PC-9 (cell line): ENCODE measurements at regions of chr7 and their contacts with region 1.

Region 1: GRCh38 chr7:76359111-76359978 is 554 bp upstream of the YWHAG start:
- DNase-seq: peak; percentile 93 to 96
- H3K4me3 ChIP-seq: peak overlapping the region; percentile 73; the same call in 1 of the 2 replicates
- H3K27ac ChIP-seq: peak overlapping the region; percentile 80
- H3K4me1 ChIP-seq: peaks cover 48% of the 10 kb centered on the region
- H3K27me3 ChIP-seq: no peaks in the 10 kb centered on the region
- CTCF ChIP-seq: peak; percentile 69

Region 2: DNA sequence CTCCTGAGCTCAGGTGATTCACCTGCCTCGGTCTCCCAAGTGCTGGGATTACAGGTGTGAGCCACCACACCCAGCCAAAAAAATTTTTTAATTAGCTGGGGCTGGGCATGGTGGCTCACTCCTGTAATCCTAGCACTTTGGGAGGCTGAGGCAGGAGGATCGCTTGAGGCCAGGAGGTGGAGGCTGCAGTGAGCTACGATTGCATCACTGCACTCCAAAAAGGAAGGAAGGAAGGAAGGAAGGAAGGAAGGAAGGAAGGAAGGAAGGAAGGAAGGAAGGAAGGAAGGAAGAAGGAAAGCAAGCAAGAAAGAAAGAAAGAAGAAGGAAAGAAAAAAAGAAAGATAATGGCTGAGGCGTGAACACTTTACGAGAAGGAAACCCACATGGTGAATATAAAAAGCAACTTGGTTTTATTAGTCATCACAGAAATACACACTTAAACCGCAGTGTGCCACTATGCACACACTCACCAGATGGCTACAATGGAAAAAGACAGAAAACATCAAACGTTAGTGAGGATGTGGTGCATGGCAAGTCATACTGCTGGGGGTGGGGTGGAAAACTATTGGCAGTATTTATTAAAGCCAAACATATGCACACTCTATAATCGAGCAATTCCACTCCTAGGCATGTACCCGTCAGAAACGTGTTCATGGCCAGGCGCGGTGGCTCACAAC is 582.9 kb before region 1 on chr7:
- CTCF ChIA-PET with region 1: no interaction called
- POLR2A ChIA-PET with region 1: no interaction called
- intact Hi-C with region 1: no loop called
- DNase-seq: peak in 1 of 2 experiments; percentile 61
- H3K4me3 ChIP-seq: no peak overlapping the region
- H3K27ac ChIP-seq: no peak overlapping the region
- H3K4me1 ChIP-seq: peaks cover 14% of the 10 kb centered on the region
- H3K27me3 ChIP-seq: no peaks in the 10 kb centered on the region
- CTCF ChIP-seq: no peak

Region 3: GRCh38 chr7:76291343-76292212 is 67.8 kb before region 1 on chr7:
- CTCF ChIA-PET with region 1: no interaction called
- POLR2A ChIA-PET with region 1: no interaction called
- intact Hi-C with region 1: loop called (anchors 2 kb)
- DNase-seq: peak; percentile 97 to 100
- H3K4me3 ChIP-seq: peak overlapping the region; percentile 57
- H3K27ac ChIP-seq: peak overlapping the region; percentile 93
- H3K4me1 ChIP-seq: peaks cover 60% of the 10 kb centered on the region
- H3K27me3 ChIP-seq: no peaks in the 10 kb centered on the region
- CTCF ChIP-seq: peak; percentile 97

Region 4: GRCh38 chr7:76340617-76341131 is 18.7 kb before region 1 on chr7:
- CTCF ChIA-PET with region 1: interaction called, 7 read pairs
- POLR2A ChIA-PET with region 1: no interaction called
- intact Hi-C with region 1: loop called (anchors 2 kb)
- DNase-seq: peak in 1 of 2 experiments; percentile 41
- H3K4me3 ChIP-seq: no peak overlapping the region
- H3K27ac ChIP-seq: peak overlapping the region; percentile 84
- H3K4me1 ChIP-seq: peaks cover 63% of the 10 kb centered on the region
- H3K27me3 ChIP-seq: no peaks in the 10 kb centered on the region
- CTCF ChIP-seq: no peak

Region 5: GRCh38 chr7:76393116-76394031 is 34.0 kb after region 1 on chr7:
- CTCF ChIA-PET with region 1: interaction called, 3 read pairs
- POLR2A ChIA-PET with region 1: interaction called, 15 read pairs
- intact Hi-C with region 1: loop called (anchors 1 kb)
- DNase-seq: peak; percentile 82 to 96
- H3K4me3 ChIP-seq: peak overlapping the region; percentile 91
- H3K27ac ChIP-seq: peak overlapping the region; percentile 37
- H3K4me1 ChIP-seq: peaks cover 18% of the 10 kb centered on the region
- H3K27me3 ChIP-seq: no peaks in the 10 kb centered on the region
- CTCF ChIP-seq: no peak

Region 6: GRCh38 chr7:76509931-76510877 is 150.9 kb after region 1 on chr7 and contains the start of gene UPK3B:
- CTCF ChIA-PET with region 1: interaction called, 14 read pairs
- POLR2A ChIA-PET with region 1: interaction called, 3 read pairs
- intact Hi-C with region 1: no loop called
- DNase-seq: peak; percentile 85 to 95
- H3K4me3 ChIP-seq: peak within 1 kb of the TSS; percentile 44
- H3K27ac ChIP-seq: peak within 1 kb of the TSS; percentile 48
- H3K4me1 ChIP-seq: peaks cover 28% of the 10 kb centered on the region
- H3K27me3 ChIP-seq: no peaks in the 10 kb centered on the region
- CTCF ChIP-seq: no peak; the same call in 1 of the 2 replicates
- total RNA-seq, gene UPK3B: 16.8 and 19.2 TPM in 2 replicates